H1 (cell line): ENCODE measurements at regions of chr16 and their contacts with region 1.

Region 1: DNA sequence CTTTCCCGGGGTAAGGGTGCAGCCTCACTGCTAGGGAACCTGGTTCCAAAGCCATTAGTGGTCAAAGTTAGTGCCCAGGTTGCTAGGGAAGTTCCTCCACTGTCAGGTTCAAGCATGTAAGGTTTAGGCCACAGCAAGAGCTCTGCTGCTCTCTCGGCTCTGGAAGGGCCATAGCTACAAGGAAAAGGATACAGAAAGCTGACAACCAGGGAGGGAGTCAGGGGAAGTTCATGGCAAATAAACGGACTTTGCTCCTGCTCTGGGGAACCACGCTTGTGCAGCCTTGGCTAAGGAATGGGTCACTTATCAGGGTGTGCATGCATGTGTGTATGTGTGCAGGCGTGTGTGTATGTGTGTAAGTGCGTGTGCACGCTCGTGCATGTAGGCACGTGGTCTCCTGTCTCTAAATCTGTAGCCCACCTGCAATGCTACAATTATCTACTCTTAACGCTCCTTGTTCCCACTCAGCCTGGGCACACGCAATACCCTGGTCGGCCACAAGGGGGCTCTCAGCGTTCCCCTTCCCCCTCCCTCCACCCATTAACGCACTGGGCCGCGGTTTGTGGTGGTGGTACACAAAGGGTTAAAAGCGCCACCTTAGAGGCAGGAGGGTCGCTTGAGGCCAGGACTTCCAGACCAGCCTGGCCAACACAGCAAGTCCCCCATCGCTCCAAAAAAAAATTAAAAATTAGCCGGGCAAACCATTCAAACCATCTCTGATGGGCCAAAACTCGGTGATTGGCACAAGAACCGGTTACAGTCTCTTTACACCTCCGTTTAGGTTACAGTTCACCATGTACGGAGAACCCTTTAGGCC is 48.4 kb upstream of the KDM8 start:
- DNase-seq: peak; percentile 41 to 95
- H3K4me3 ChIP-seq: peak overlapping the region in 1 of 4 experiments; percentile 49; a peak in 2 of 8 replicates
- H3K27ac ChIP-seq: no peak overlapping the region
- H3K4me1 ChIP-seq: no peaks in the 10 kb centered on the region
- H3K27me3 ChIP-seq: no peaks in the 10 kb centered on the region
- CTCF ChIP-seq: peak; percentile 83 to 96 (median 96)
- EP300 ChIP-seq: peak in 1 of 2 experiments; percentile 62; a peak in 1 of 3 replicates
- POLR2A ChIP-seq: no peak
- RAD21 ChIP-seq: peak; percentile 69 to 77

Region 2: GRCh38 chr16:27169511-27170071 is 14.7 kb after region 1 on chr16:
- CTCF ChIA-PET with region 1: interaction called, 69 read pairs
- POLR2A ChIA-PET with region 1: no interaction called
- DNase-seq: no peak
- H3K4me3 ChIP-seq: no peak overlapping the region
- H3K27ac ChIP-seq: no peak overlapping the region
- H3K4me1 ChIP-seq: no peaks in the 10 kb centered on the region
- H3K27me3 ChIP-seq: no peaks in the 10 kb centered on the region; a peak in 1 of 7 replicates
- CTCF ChIP-seq: peak; percentile 21 to 34 (median 28); a peak in 3 of 4 replicates
- EP300 ChIP-seq: no peak
- POLR2A ChIP-seq: no peak
- RAD21 ChIP-seq: peak; percentile 21 to 36; a peak in 3 of 4 replicates